Heart right ventricle (tissue), 16 donors: ENCODE measurements at regions of chr11 and their contacts with region 1.

Region 1: GRCh38 chr11:68751004-68751856 is at the start of gene TESMIN:
- DNase-seq: peak; percentile 72 to 89
- ATAC-seq: peak; percentile 85 to 93 (median 92)
- H3K4me3 ChIP-seq: peak within 1 kb of the TSS in 8 of 10 donors; percentile 10 to 54 (median 42)
- H3K27ac ChIP-seq: peak within 1 kb of the TSS in 2 of 10 donors; percentile 8 to 70
- H3K4me1 ChIP-seq: peaks cover 0 to 28% (median 17%) of the 10 kb centered on the region in 9 donors
- H3K27me3 ChIP-seq: no peaks in the 10 kb centered on the region
- CTCF ChIP-seq: no peak
- total RNA-seq, gene TESMIN: 0.30 to 2.6 (median 0.64) TPM in 9 of 10 donors, not detected in the other

Region 2: DNA sequence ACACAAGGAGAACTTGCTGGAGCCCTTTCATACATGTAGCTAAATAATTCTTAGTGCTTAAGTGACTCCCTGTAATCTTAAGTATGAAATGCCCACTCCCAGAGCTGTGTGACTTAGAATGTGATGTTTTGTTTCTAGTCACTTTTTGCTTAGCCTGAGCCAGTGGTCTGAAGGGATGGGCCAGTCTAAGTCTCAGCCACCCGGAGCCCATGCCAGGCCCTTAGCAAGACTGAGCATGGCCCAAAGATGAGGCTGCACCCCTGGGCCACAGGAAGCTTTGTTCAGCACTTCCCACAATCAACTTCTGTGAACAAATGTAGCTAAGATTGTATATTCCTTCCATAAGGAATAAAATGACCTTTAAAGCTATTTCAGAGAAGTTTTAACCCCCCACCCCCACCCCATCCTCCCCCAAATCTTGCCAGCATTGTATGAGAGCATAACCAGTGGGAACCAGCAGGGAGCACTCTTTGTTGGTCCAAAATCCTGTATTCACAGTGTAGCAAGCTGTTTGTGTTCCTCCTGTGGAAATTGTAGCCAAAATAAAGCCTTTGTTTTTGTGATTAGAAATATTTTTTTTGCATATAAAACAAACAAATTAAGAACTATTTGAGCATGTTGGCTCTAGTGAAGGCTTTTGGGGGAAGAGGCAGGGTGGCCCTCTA is 140.6 kb before region 1 on chr11:
- intact Hi-C with region 1: loop called in 1 of 10 experiments (anchors 10 kb)
- DNase-seq: no peak
- ATAC-seq: peak in 2 of 8 donors; percentile 17 to 46
- H3K4me3 ChIP-seq: no peak overlapping the region
- H3K27ac ChIP-seq: no peak overlapping the region
- H3K4me1 ChIP-seq: no peaks in the 10 kb centered on the region
- H3K27me3 ChIP-seq: no peaks in the 10 kb centered on the region
- CTCF ChIP-seq: peak in 4 of 9 donors; percentile 14 to 41 (median 28)